Aorta (tissue), 5 donors: ENCODE measurements at regions of chr2 and their contacts with region 1.

Region 1: GRCh38 chr2:230007931-230008707 is 60.6 kb downstream of the SLC16A14 start:
- DNase-seq: peak; percentile 81 to 89
- ATAC-seq: peak; percentile 67
- H3K4me3 ChIP-seq: no peak overlapping the region
- H3K27ac ChIP-seq: no peak overlapping the region
- H3K4me1 ChIP-seq: no peaks in the 10 kb centered on the region
- H3K27me3 ChIP-seq: no peaks in the 10 kb centered on the region

Region 2: DNA sequence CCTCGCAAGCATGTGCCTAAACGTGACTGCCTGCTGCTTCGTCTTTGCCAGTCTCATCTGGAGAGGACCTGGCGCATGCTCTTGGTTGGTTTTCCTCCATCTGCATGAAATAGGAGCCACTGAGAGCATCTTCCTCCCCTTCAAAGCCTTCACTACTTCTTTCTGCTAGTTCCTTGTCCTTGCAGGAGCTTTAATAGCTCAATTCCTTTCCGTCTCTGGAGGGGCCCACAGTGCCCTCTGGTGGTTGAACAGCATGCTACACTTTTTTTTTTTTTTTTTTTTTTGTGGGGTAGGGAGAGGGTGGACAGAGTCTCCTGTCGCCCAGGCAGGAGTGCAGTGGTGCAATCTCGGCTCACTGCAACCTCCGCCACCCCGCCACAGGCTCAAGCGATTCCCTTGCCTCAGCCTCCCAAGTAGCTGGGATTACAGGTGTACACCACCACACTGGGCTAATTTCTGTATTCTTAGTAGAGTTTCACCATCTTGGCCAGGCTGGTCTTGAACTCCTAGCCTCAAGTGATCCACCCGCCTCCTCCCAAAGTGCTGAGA is 152.1 kb after region 1 on chr2:
- intact Hi-C with region 1: loop called in 1 of 2 experiments (anchors 2 kb)
- DNase-seq: peak in 1 of 2 donors; percentile 59
- ATAC-seq: peak; percentile 73
- H3K4me3 ChIP-seq: no peak overlapping the region
- H3K27ac ChIP-seq: no peak overlapping the region
- H3K4me1 ChIP-seq: no peaks in the 10 kb centered on the region
- H3K27me3 ChIP-seq: no peaks in the 10 kb centered on the region

Region 3: DNA sequence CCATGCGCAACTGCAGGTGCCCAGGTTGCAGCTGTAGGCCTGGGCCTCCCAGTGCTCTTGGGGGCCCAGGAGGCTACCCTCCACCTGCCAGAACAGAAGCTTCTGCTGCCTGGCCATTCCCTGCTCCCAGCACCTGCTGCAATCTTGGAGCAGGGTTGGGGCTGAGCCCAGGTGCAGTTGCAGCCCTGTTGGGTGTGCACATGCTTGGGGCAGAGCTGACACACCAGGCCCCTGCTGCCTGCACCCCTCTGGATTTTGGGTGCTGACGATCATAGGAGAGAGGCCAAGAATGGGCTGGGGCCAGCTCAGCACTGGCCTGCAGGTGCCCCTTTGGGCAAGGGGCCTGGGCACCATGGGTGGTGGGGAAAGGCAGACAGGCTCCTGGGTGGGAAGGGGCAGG is 298.4 kb after region 1 on chr2:
- intact Hi-C with region 1: no loop called
- DNase-seq: no peak
- ATAC-seq: peak; percentile 33
- H3K4me3 ChIP-seq: no peak overlapping the region
- H3K27ac ChIP-seq: no peak overlapping the region
- H3K4me1 ChIP-seq: no peaks in the 10 kb centered on the region
- H3K27me3 ChIP-seq: no peaks in the 10 kb centered on the region